Activated CD4-positive, alpha-beta T cell treated with anti-CD3 and anti-CD28 coated beads for 36 hours (primary cell): ENCODE measurements at regions of chr6 and their contacts with region 1.

Region 1: DNA sequence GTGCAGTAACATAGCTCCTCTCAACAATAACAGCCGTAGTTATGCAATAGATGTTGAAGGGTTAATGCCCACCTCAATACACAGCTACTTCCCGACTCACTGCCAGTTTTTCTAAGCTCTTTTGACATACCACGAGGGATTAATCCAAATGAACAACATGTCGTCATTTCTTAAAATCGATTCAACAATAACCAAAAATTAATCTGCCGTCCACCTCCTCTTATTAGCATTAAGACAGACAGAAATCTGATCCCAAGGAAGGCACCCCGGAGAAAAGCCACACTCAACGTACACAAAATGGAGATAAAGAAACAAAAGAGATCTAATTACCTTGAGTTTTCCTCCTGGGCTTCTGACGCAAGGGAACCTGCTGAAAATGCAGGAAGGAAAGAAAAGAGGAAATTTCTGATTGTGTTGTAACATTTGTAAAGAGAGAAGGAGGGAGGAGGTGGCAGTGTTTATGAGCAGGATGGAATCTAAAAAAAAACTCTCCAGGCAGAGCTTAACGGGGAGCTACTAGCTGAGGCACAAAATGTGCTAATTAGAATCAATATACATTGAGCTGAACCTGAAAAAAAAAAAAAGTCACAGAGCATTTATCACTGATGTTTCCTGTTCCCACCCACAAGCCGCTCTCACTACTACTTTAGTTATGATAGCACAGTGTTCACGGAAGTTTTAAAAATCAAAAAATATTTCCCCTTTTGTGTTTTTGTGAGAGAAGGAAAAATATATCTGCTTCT is 109.3 kb downstream of the IPCEF1 start:
- DNase-seq: peak; percentile 62
- ATAC-seq: peak; percentile 57
- H3K4me3 Mint-ChIP-seq: peak overlapping the region; percentile 79
- H3K27ac Mint-ChIP-seq: peak overlapping the region; percentile 89
- H3K4me1 Mint-ChIP-seq: peaks cover 80% of the 10 kb centered on the region
- H3K27me3 Mint-ChIP-seq: peaks cover 6% of the 10 kb centered on the region

Region 2: DNA sequence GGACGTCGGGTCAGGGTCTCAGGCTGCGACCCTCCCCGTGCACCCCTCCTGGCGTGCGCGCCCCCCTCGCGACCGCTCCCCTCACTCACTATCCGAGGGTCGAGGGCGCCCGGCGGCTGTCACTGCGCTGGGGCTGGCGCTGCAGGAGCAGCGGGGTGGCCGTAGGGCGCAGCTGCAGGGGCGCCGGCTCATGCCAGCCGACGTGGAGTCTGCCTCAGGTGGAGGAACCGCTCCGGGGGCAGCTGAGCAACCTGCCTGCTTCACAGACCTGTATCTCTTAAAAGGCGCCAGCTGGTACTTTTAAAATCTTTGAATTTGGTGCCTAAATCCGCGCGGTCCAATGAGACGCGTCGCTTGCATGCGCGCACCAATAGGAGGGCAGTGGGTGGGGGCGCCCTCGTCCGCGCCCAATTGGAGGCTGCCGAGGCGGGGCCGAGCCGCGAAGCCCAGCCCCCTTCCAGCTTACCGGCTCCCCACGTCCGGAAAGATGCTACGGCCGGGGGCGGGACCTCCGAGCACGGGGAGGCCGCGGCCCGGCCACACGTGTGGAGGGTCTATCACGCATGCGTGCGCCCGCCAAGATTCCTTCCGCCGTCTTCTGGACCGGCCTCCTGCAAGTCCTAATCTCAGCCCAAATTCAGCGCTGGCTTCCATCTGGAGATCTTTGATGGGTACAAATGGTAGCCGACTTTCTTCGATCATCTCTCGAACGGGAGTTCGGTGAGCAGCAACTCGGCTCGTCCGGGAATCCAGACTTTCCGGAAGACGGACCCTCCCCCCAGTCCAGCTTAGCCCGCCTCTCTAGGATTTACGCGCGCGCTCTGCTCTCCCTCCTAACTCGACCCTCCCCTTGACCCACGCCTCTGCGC is 1264.3 kb before region 1 on chr6 and contains the start of gene FBXO5:
- CTCF ChIA-PET with region 1: no interaction called
- POLR2A ChIA-PET with region 1: no interaction called
- intact Hi-C with region 1: loop called in 1 of 2 experiments (anchors 5 kb)
- DNase-seq: peak; percentile 98
- ATAC-seq: peak; percentile 89
- H3K4me3 Mint-ChIP-seq: peak within 1 kb of the TSS; percentile 90
- H3K27ac Mint-ChIP-seq: peak within 1 kb of the TSS; percentile 100
- H3K4me1 Mint-ChIP-seq: peaks cover 34% of the 10 kb centered on the region
- H3K27me3 Mint-ChIP-seq: no peaks in the 10 kb centered on the region
- total RNA-seq, gene FBXO5: 48.7 to 57.3 TPM

Region 3: GRCh38 chr6:154229786-154230185 is 17.5 kb before region 1 on chr6:
- CTCF ChIA-PET with region 1: interaction called, 36 read pairs
- POLR2A ChIA-PET with region 1: interaction called, 7 read pairs
- intact Hi-C with region 1: loop called (anchors 1 kb)
- DNase-seq: peak; percentile 82
- ATAC-seq: peak; percentile 71
- H3K4me3 Mint-ChIP-seq: peak overlapping the region; percentile 58
- H3K27ac Mint-ChIP-seq: peak overlapping the region; percentile 92
- H3K4me1 Mint-ChIP-seq: peaks cover 83% of the 10 kb centered on the region
- H3K27me3 Mint-ChIP-seq: no peaks in the 10 kb centered on the region

Region 4: GRCh38 chr6:154276810-154277628 is 29.7 kb after region 1 on chr6:
- CTCF ChIA-PET with region 1: interaction called, 21 read pairs
- POLR2A ChIA-PET with region 1: no interaction called
- intact Hi-C with region 1: loop called (anchors 1 kb)
- DNase-seq: no peak
- ATAC-seq: peak; percentile 78
- H3K4me3 Mint-ChIP-seq: peak overlapping the region; percentile 63
- H3K27ac Mint-ChIP-seq: peak overlapping the region; percentile 84
- H3K4me1 Mint-ChIP-seq: peaks cover 29% of the 10 kb centered on the region
- H3K27me3 Mint-ChIP-seq: no peaks in the 10 kb centered on the region

Region 5: GRCh38 chr6:154478021-154478700 is 230.9 kb after region 1 on chr6:
- CTCF ChIA-PET with region 1: no interaction called
- POLR2A ChIA-PET with region 1: no interaction called
- intact Hi-C with region 1: no loop called
- DNase-seq: no peak
- ATAC-seq: no peak
- H3K4me3 Mint-ChIP-seq: no peak overlapping the region
- H3K27ac Mint-ChIP-seq: no peak overlapping the region
- H3K4me1 Mint-ChIP-seq: no peaks in the 10 kb centered on the region
- H3K27me3 Mint-ChIP-seq: no peaks in the 10 kb centered on the region

Region 6: DNA sequence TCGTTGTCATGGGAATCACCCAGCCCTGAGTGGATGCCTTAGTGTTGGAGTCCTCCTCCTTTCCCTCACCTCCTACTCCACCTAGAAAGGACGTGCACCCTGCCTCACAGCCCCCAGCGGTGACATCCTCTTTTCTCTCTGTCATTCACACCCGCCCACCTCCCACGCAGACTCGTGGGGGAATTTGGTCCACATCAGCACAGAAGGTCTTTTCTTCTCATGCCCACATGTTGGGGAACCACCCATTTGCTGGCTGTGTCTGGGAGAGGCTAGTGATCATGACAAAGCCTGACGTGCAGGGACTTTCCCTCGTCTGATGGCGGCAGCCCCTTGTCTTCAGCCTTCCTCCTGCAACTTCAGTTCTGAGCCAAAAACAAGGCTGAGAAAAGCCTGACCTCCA is 359.2 kb after region 1 on chr6:
- CTCF ChIA-PET with region 1: no interaction called
- POLR2A ChIA-PET with region 1: no interaction called
- intact Hi-C with region 1: loop called in 1 of 2 experiments (anchors 5 kb)
- DNase-seq: peak; percentile 96
- ATAC-seq: peak; percentile 92
- H3K4me3 Mint-ChIP-seq: peak overlapping the region; percentile 13
- H3K27ac Mint-ChIP-seq: peak overlapping the region; percentile 84
- H3K4me1 Mint-ChIP-seq: peaks cover 45% of the 10 kb centered on the region
- H3K27me3 Mint-ChIP-seq: peaks cover 4% of the 10 kb centered on the region

Region 7: GRCh38 chr6:155154158-155154830 is 907.0 kb after region 1 on chr6:
- CTCF ChIA-PET with region 1: no interaction called
- POLR2A ChIA-PET with region 1: no interaction called
- intact Hi-C with region 1: loop called in 1 of 2 experiments (anchors 10 kb)
- DNase-seq: peak; percentile 62
- ATAC-seq: peak; percentile 61
- H3K4me3 Mint-ChIP-seq: peak overlapping the region; percentile 35
- H3K27ac Mint-ChIP-seq: peak overlapping the region; percentile 91
- H3K4me1 Mint-ChIP-seq: peaks cover 78% of the 10 kb centered on the region
- H3K27me3 Mint-ChIP-seq: peaks cover 3% of the 10 kb centered on the region